H1 (cell line): ENCODE measurements at regions of chr1 and their contacts with region 1.

Region 1: GRCh38 chr1:153677718-153678505 is 576 bp upstream of the NPR1 start:
- DNase-seq: peak in 1 of 2 experiments; percentile 82
- H3K4me3 ChIP-seq: peak overlapping the region; percentile 38 to 76 (median 69)
- H3K27ac ChIP-seq: no peak overlapping the region
- H3K4me1 ChIP-seq: peaks cover 3 to 9% (median 6%) of the 10 kb centered on the region in 4 experiments; a peak in 6 of 7 replicates
- H3K27me3 ChIP-seq: peaks cover 0 to 21% (median 9%) of the 10 kb centered on the region in 4 experiments; a peak in 5 of 7 replicates
- CTCF ChIP-seq: peak; percentile 97 to 98 (median 98)
- EP300 ChIP-seq: no peak
- POLR2A ChIP-seq: no peak
- RAD21 ChIP-seq: peak; percentile 94 to 95

Region 2: DNA sequence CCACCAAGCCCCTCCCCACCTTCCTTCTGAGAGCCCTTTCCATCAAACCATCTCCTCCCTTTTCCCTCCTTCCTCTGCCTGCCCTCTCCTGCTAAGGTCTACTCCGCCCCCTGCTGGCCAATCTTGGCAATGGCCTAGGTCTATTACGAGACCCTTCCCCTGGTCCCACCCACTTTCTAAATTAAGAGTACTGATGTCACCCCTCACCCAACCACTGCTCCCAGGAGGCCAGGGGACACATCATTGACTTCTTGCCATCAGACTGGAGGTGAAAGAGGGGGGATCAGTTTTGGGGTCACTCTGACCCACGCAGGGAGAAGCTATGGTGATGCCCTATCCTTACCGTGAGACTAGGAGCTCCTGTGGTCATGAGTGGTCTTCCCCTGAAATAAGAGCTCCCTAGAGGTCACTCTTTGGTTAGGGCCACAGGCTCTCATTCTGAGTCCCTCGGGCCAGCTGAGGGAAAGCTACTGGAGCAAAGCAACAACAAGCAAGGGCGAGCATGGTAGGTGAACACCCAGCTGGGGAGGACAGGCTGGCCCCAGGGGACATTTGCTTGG is 182.9 kb before region 1 on chr1:
- CTCF ChIA-PET with region 1: no interaction called
- POLR2A ChIA-PET with region 1: no interaction called
- DNase-seq: peak; percentile 82 to 100
- H3K4me3 ChIP-seq: no peak overlapping the region
- H3K27ac ChIP-seq: 0 out of 2 replicates have a peak overlapping the region, but pooled peaks have one; percentile 38
- H3K4me1 ChIP-seq: peaks cover 0 to 6% (median 2%) of the 10 kb centered on the region in 4 experiments; a peak in 4 of 7 replicates
- H3K27me3 ChIP-seq: no peaks in the 10 kb centered on the region
- CTCF ChIP-seq: peak; percentile 80 to 94 (median 92)
- EP300 ChIP-seq: peak in 1 of 2 experiments; percentile 66; a peak in 2 of 3 replicates
- POLR2A ChIP-seq: no peak
- RAD21 ChIP-seq: peak; percentile 88 to 97

Region 3: GRCh38 chr1:153658400-153659174 is 19.3 kb before region 1 on chr1 and contains the start of gene SNAPIN:
- CTCF ChIA-PET with region 1: interaction called, 3 read pairs
- POLR2A ChIA-PET with region 1: interaction called, 66 read pairs
- DNase-seq: peak; percentile 64 to 96
- H3K4me3 ChIP-seq: peak within 1 kb of the TSS; percentile 71 to 98 (median 90)
- H3K27ac ChIP-seq: peak within 1 kb of the TSS; percentile 85; the same call in 1 of the 2 replicates
- H3K4me1 ChIP-seq: peaks cover 0 to 4% (median 2%) of the 10 kb centered on the region in 4 experiments; a peak in 2 of 7 replicates
- H3K27me3 ChIP-seq: no peaks in the 10 kb centered on the region
- CTCF ChIP-seq: peak in 2 of 3 experiments; percentile 4 to 6; a peak in 2 of 4 replicates
- EP300 ChIP-seq: no peak
- POLR2A ChIP-seq: peak in 1 of 2 experiments; percentile 83; a peak in 2 of 3 replicates
- RAD21 ChIP-seq: peak in 1 of 2 experiments; percentile 6; a peak in 1 of 4 replicates
- total RNA-seq, gene SNAPIN: 22.3 and 25.7 TPM in 2 replicates

Region 4: DNA sequence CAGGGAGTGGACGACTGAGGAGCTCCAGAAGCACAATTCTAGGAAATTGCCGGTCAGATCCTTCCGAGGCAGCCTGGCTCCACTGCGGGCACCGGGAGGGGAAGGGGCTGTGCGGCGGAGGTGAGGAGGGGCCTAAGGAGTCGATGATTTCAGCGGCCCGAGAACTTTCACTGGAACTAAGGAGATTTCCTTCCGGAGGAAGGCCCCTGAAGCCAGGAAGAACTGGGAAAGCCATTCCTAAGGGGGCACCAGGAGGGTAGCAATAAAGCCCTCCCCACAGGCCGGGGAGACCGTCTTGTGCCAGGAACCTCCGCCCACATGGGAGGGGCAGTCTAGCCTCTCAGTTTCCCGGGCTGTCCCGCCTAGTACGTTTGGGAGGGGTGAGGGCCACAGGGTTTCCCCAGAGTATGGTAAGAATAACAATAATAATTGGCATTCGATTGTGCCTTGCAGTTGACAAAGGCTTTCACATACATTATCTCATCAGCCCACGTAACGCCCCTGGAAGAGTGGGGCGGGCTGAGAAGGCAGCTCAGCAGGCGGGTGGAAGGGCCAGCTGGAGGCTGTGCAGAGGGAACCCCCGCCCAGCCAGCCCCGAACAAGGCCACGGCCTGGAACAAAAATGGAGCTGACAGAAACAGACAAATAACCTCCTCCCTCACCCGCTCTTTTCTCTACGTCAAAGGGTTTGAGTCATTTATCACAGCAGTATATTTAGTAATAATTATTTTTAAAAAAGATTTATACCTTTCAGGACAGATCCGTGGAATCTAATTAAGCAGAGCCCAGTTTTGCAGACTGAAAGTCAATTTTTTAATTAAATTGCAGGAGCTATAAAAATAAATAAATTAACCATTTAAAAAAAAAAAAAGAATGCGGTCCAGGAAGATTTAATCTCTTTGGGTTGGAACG is 20.4 kb after region 1 on chr1:
- CTCF ChIA-PET with region 1: interaction called, 18 read pairs
- POLR2A ChIA-PET with region 1: interaction called, 5 read pairs
- DNase-seq: peak in 1 of 2 experiments; percentile 65
- H3K4me3 ChIP-seq: peak overlapping the region in 2 of 4 experiments; percentile 8 to 39; a peak in 4 of 8 replicates
- H3K27ac ChIP-seq: peak overlapping the region; percentile 35; the same call in 1 of the 2 replicates
- H3K4me1 ChIP-seq: peaks cover 3 to 18% (median 12%) of the 10 kb centered on the region in 4 experiments
- H3K27me3 ChIP-seq: no peaks in the 10 kb centered on the region
- CTCF ChIP-seq: no peak
- EP300 ChIP-seq: no peak
- POLR2A ChIP-seq: no peak
- RAD21 ChIP-seq: no peak

Region 5: DNA sequence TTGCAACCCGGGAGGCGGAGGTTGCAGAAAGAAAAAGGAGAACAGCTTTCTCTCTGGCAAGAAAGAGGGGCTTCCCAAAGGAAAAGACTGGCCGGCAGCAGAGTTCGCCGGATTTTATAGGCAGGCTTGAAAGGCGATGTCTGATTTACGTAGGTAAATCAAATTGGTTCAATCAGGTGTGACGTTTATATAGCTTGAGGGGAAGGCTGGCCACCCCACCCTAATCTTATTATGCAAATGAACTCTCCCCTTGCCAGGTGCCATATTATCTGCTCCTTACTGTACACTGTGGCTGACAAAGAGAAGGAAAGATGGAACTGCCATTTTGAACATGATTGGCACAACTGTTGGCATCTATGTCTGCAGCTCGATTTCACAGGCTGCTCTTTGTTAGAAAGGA is 33.1 kb after region 1 on chr1:
- CTCF ChIA-PET with region 1: interaction called, 45 read pairs
- POLR2A ChIA-PET with region 1: interaction called, 5 read pairs
- DNase-seq: no peak
- H3K4me3 ChIP-seq: no peak overlapping the region
- H3K27ac ChIP-seq: no peak overlapping the region
- H3K4me1 ChIP-seq: no peaks in the 10 kb centered on the region
- H3K27me3 ChIP-seq: no peaks in the 10 kb centered on the region
- CTCF ChIP-seq: no peak
- EP300 ChIP-seq: no peak
- POLR2A ChIP-seq: no peak
- RAD21 ChIP-seq: no peak

Region 6: GRCh38 chr1:153727463-153728304 is 49.8 kb after region 1 on chr1 and contains the start of gene INTS3:
- CTCF ChIA-PET with region 1: interaction called, 12 read pairs
- POLR2A ChIA-PET with region 1: interaction called, 17 read pairs
- DNase-seq: peak; percentile 97 to 99
- H3K4me3 ChIP-seq: peak within 1 kb of the TSS; percentile 78 to 96 (median 86)
- H3K27ac ChIP-seq: peak within 1 kb of the TSS; percentile 88
- H3K4me1 ChIP-seq: peaks cover 0 to 11% (median 3%) of the 10 kb centered on the region in 4 experiments; a peak in 6 of 7 replicates
- H3K27me3 ChIP-seq: no peaks in the 10 kb centered on the region
- CTCF ChIP-seq: peak in 1 of 3 experiments; percentile 11; a peak in 1 of 4 replicates
- EP300 ChIP-seq: no peak
- POLR2A ChIP-seq: peak; percentile 40 to 56
- RAD21 ChIP-seq: no peak; a peak in 1 of 4 replicates
- total RNA-seq, gene INTS3: 63.2 and 66.8 TPM in 2 replicates

Region 7: DNA sequence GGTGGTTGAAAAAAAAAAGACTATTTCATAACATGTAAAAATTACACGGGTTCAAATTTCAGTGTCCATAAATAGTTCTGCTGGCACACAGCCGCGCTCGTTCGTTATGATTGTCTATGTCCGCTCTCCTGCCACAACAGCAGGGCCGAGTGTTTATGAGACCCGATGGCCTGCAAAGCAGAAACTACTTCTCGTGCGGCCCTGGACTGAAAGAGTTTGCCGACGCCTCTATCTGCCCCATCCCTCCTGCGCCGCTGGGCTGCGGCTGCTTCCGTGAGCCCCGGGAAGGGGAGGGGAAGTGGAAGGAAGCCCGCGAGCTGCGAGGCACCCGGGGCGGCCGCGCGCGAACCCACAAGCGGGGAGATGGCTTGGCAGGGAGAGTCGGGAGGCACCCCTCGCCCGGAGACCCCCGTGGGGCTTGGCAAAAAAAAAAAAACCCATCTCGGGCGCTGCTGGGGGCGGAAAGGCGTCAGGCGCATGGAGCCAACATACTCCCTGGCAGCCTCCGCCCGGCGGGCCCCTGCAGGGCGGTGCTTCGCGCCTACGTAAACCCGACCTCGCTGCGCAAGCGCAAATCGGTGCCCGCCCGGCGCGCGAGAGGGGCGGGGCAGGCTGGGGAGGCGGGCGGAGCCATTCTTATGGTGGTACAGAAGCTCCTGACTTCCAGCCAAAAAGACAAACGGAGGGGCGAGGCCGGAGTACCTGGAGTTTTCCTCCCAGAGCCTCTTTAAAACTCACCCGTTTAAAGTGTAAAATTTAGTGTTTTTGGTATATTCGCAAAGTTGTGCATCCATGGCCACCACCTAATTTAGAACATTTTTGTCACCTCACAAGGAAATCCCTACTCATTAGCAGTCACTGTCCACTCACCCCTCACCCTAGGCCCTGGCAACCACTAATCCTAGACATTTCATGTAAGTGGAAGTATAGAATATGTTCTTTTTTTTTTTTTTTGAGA is 105.6 kb after region 1 on chr1:
- CTCF ChIA-PET with region 1: no interaction called
- POLR2A ChIA-PET with region 1: no interaction called
- DNase-seq: peak; percentile 80 to 97
- H3K4me3 ChIP-seq: peak overlapping the region; percentile 62 to 71 (median 66)
- H3K27ac ChIP-seq: peak overlapping the region; percentile 81; the same call in 1 of the 2 replicates
- H3K4me1 ChIP-seq: peaks cover 0 to 2% (median 0%) of the 10 kb centered on the region in 4 experiments; a peak in 2 of 7 replicates
- H3K27me3 ChIP-seq: no peaks in the 10 kb centered on the region; a peak in 1 of 7 replicates
- CTCF ChIP-seq: no peak
- EP300 ChIP-seq: no peak
- POLR2A ChIP-seq: peak in 1 of 2 experiments; percentile 86; a peak in 2 of 3 replicates
- RAD21 ChIP-seq: no peak